Activated naive CD4-positive, alpha-beta T cell treated with anti-CD3 and anti-CD28 coated beads, Interleukin-2, amount 10 ng/mL, durations not matched to agents 7 days and 5 days (primary cell): ENCODE measurements at regions of chr6 and their contacts with region 1.

Region 1: DNA sequence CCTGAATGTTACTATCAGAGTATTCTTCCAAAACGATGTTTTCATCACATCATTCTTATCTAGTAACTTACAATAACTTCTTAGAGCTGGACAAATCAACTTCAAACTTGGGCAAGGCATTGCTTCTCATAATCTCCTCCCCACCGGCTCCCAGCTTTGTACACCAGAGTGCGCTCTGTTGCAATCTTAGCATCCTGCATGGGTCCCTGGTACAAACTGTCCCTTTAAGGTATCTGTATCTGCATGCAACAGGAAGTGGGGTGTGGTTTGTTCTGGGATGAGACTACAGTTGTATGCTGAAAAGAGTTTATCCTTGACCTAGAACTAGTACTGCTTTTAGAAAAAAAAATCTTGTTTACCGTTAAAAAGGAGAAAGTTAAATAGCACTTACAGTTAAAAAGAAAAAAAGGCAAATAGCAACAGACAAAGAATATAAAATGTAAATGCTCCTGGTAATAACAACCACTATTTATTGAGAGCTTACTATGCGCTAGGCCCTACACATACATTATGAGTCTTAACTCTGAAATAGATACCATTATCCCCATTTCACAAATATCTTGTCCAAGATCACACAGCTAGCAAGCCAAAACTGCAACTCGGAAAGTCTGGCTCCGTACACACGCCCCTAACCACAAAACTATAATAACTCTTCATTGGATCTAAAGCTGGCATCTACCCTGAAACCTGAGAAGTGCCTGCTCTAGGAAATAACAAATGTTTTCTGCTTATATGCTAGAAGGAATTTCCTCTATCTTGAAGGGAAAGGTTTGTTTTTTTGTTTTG is 9.8 kb upstream of the HECA start:
- DNase-seq: peak; percentile 89
- H3K4me3 Mint-ChIP-seq: peak overlapping the region; percentile 61
- H3K27ac Mint-ChIP-seq: peak overlapping the region; percentile 97
- H3K4me1 Mint-ChIP-seq: peaks cover 49% of the 10 kb centered on the region
- H3K27me3 Mint-ChIP-seq: no peaks in the 10 kb centered on the region

Region 2: GRCh38 chr6:139112146-139112545 is 12.9 kb before region 1 on chr6:
- CTCF ChIA-PET with region 1: interaction called, 10 read pairs
- DNase-seq: no peak
- H3K4me3 Mint-ChIP-seq: no peak overlapping the region
- H3K27ac Mint-ChIP-seq: peak overlapping the region; percentile 64
- H3K4me1 Mint-ChIP-seq: peaks cover 53% of the 10 kb centered on the region
- H3K27me3 Mint-ChIP-seq: no peaks in the 10 kb centered on the region

Region 3: GRCh38 chr6:139161817-139162284 is 36.8 kb after region 1 on chr6:
- CTCF ChIA-PET with region 1: interaction called, 15 read pairs
- DNase-seq: peak; percentile 78
- H3K4me3 Mint-ChIP-seq: peak overlapping the region; percentile 65
- H3K27ac Mint-ChIP-seq: peak overlapping the region; percentile 96
- H3K4me1 Mint-ChIP-seq: peaks cover 81% of the 10 kb centered on the region
- H3K27me3 Mint-ChIP-seq: no peaks in the 10 kb centered on the region

Region 4: DNA sequence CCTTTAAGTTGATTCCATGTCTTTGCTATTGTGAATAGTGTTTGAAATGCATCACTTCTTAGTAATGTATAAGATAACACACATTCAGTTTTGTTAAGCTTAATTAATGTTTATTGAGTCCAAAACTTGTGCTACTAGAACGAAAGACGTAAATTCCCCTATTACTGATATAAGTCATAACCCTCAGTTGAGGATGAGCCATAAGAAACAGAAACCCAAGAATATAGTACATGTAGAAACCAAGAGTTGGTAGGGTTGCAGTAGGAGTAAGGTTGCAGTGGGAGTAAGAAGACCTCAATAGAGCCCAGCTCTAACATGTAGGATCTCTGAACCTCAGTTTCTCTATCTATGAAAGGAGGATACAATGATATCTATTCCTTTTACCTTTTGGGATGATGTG is 230.1 kb after region 1 on chr6:
- CTCF ChIA-PET with region 1: no interaction called
- DNase-seq: no peak
- H3K4me3 Mint-ChIP-seq: no peak overlapping the region
- H3K27ac Mint-ChIP-seq: no peak overlapping the region
- H3K4me1 Mint-ChIP-seq: no peaks in the 10 kb centered on the region
- H3K27me3 Mint-ChIP-seq: no peaks in the 10 kb centered on the region